ENCODE measurements at regions of chr19 and their contacts with region 1.

Region 1: GRCh38 chr19:41226053-41226873 is 7.2 kb downstream of the AXL start:
- DNase-seq: peak; percentile 82 to 85
- H3K4me3 ChIP-seq: peak overlapping the region; percentile 62
- H3K4me3 Mint-ChIP-seq: peak overlapping the region; percentile 85
- H3K27ac Mint-ChIP-seq: peak overlapping the region; percentile 81
- H3K4me1 ChIP-seq: 0 out of 2 replicates have a peak, but pooled peaks cover 15% of the 10 kb centered on the region
- H3K4me1 Mint-ChIP-seq: peaks cover 19% of the 10 kb centered on the region
- H3K27me3 ChIP-seq: no peaks in the 10 kb centered on the region
- H3K27me3 Mint-ChIP-seq: no peaks in the 10 kb centered on the region
- CTCF ChIP-seq: peak in 1 of 2 experiments; percentile 10

Region 2: GRCh38 chr19:41194157-41194552 is 32.1 kb before region 1 on chr19:
- CTCF ChIA-PET with region 1: no interaction called
- POLR2A ChIA-PET with region 1: no interaction called
- intact Hi-C with region 1: no loop called
- DNase-seq: no peak
- H3K4me3 ChIP-seq: peak overlapping the region; percentile 85
- H3K4me3 Mint-ChIP-seq: peak overlapping the region; percentile 76
- H3K27ac Mint-ChIP-seq: peak overlapping the region; percentile 43
- H3K4me1 ChIP-seq: peaks cover 23% of the 10 kb centered on the region
- H3K4me1 Mint-ChIP-seq: peaks cover 25% of the 10 kb centered on the region
- H3K27me3 ChIP-seq: no peaks in the 10 kb centered on the region
- H3K27me3 Mint-ChIP-seq: no peaks in the 10 kb centered on the region
- CTCF ChIP-seq: no peak

Region 3: DNA sequence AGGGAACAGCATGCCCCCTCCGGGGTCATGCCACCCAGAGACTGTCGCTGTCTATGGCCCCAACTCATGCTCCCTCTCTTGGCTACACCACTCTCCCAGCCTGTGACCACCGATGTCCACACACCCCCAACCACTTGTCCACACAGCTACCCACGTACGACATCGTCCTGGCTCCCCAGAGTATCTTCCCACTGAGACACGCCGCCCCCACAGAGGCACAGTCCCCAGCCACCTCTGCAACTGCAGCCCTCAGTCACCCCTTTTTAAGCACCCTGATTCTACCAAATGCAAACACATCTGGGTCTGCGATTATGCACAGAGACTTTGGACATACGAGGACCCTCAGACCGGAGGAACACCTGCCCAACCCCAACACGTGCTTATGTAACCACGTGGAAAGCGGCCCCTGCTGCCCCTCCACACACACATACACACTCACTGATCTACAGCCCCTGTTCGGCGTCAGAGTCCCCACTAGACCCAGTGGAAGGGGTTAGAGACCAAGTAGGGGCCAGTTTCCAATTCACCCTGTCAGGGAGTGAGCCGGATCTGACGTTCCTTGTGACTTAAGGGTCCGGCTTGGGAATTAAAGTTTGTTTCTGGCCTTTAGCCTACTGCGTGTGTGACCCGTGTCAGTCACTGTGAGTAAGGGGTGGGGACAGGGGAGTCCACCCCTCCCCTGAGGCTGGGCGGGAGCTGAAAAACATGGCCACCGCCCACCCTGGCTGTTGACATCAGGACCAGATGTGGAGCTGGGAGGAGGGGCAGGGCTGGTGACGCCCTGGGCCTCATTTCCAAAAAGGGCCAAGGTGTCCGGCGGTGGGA is 19.1 kb before region 1 on chr19:
- CTCF ChIA-PET with region 1: interaction called, 17 read pairs
- POLR2A ChIA-PET with region 1: interaction called, 15 read pairs
- intact Hi-C with region 1: no loop called
- DNase-seq: no peak
- H3K4me3 ChIP-seq: no peak overlapping the region
- H3K4me3 Mint-ChIP-seq: no peak overlapping the region
- H3K27ac Mint-ChIP-seq: no peak overlapping the region
- H3K4me1 ChIP-seq: no peaks in the 10 kb centered on the region
- H3K4me1 Mint-ChIP-seq: peaks cover 6% of the 10 kb centered on the region
- H3K27me3 ChIP-seq: no peaks in the 10 kb centered on the region
- H3K27me3 Mint-ChIP-seq: no peaks in the 10 kb centered on the region
- CTCF ChIP-seq: no peak

Region 4: DNA sequence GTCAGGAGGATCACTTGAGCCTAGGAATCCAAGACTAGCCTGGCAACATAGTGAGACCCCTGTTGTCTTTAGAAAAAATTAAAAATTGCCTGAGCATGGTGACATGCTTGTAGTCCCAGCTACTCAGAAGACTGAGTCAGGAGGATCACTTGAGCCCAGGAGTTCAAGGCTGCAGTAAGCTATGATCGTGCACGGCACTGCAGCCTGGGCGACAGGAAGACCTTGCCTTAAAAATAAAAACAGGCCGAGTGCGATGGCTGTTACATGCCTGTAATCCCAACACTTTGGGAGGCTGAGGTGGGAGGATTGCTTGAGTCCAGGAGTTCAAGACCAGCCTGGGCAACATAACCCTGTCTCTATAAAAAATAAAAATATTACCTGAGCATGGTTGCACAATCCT is 43.3 kb after region 1 on chr19:
- CTCF ChIA-PET with region 1: no interaction called
- POLR2A ChIA-PET with region 1: no interaction called
- intact Hi-C with region 1: no loop called
- DNase-seq: no peak
- H3K4me3 ChIP-seq: no peak overlapping the region
- H3K4me3 Mint-ChIP-seq: no peak overlapping the region
- H3K27ac Mint-ChIP-seq: no peak overlapping the region
- H3K4me1 ChIP-seq: peaks cover 11% of the 10 kb centered on the region
- H3K4me1 Mint-ChIP-seq: peaks cover 23% of the 10 kb centered on the region
- H3K27me3 ChIP-seq: no peaks in the 10 kb centered on the region
- H3K27me3 Mint-ChIP-seq: no peaks in the 10 kb centered on the region
- CTCF ChIP-seq: no peak